Mammary epithelial cell (primary cell): ENCODE measurements at regions of chr3 and their contacts with region 1.

Region 1: GRCh38 chr3:37779289-37780152 is 82.2 kb upstream of the CTDSPL start:
- DNase-seq: peak; percentile 55
- H3K4me3 ChIP-seq: no peak overlapping the region
- H3K27ac ChIP-seq: no peak overlapping the region
- H3K4me1 ChIP-seq: peaks cover 4% of the 10 kb centered on the region
- H3K27me3 ChIP-seq: peaks cover 3% of the 10 kb centered on the region
- CTCF ChIP-seq: peak; percentile 84 to 86

Region 2: DNA sequence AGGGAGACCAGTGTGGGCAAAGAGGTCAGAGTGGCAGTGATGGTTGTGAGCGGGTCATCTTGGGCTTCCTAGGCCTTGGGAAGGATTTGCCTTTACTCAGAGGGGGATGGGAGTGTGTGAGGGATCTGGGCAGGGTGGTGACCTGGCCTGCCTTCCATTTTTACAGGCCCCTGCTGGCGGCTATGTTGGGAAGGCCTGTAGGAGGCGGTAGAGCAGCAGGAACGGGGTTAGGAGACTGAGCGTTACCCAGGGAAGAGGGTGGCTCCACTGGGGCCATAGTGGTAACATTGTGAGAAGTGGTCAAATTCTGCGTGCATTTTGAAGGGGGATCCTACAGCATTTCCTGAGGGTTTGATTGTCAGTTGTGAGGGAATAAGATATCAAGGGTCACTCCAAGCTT is 225.2 kb before region 1 on chr3:
- CTCF ChIA-PET with region 1: no interaction called
- dilution Hi-C with region 1: no loop called
- in situ Hi-C with region 1: no loop called
- intact Hi-C with region 1: loop called (anchors 1 kb)
- DNase-seq: no peak
- H3K4me3 ChIP-seq: no peak overlapping the region
- H3K27ac ChIP-seq: no peak overlapping the region
- H3K4me1 ChIP-seq: no peaks in the 10 kb centered on the region
- H3K27me3 ChIP-seq: no peaks in the 10 kb centered on the region
- CTCF ChIP-seq: peak in 1 of 2 donors; percentile 39

Region 3: GRCh38 chr3:37668431-37668817 is 111.1 kb before region 1 on chr3:
- CTCF ChIA-PET with region 1: interaction called, 15 read pairs
- dilution Hi-C with region 1: no loop called
- in situ Hi-C with region 1: no loop called
- intact Hi-C with region 1: no loop called
- DNase-seq: peak; percentile 26
- H3K4me3 ChIP-seq: no peak overlapping the region
- H3K27ac ChIP-seq: no peak overlapping the region
- H3K4me1 ChIP-seq: peaks cover 11% of the 10 kb centered on the region
- H3K27me3 ChIP-seq: peaks cover 2% of the 10 kb centered on the region
- CTCF ChIP-seq: no peak